Activated naive CD4-positive, alpha-beta T cell treated with anti-CD3 and anti-CD28 coated beads for 36 hours (primary cell): ENCODE measurements at regions of chr1 and their contacts with region 1.

Region 1: GRCh38 chr1:112674439-112674985 is at the start of gene MOV10:
- DNase-seq: peak; percentile 60
- H3K4me3 Mint-ChIP-seq: peak within 1 kb of the TSS; percentile 92
- H3K27ac Mint-ChIP-seq: peak within 1 kb of the TSS; percentile 84
- H3K4me1 Mint-ChIP-seq: peaks cover 38% of the 10 kb centered on the region
- H3K27me3 Mint-ChIP-seq: no peaks in the 10 kb centered on the region
- total RNA-seq, gene MOV10: 46.0 to 48.8 TPM

Region 2: DNA sequence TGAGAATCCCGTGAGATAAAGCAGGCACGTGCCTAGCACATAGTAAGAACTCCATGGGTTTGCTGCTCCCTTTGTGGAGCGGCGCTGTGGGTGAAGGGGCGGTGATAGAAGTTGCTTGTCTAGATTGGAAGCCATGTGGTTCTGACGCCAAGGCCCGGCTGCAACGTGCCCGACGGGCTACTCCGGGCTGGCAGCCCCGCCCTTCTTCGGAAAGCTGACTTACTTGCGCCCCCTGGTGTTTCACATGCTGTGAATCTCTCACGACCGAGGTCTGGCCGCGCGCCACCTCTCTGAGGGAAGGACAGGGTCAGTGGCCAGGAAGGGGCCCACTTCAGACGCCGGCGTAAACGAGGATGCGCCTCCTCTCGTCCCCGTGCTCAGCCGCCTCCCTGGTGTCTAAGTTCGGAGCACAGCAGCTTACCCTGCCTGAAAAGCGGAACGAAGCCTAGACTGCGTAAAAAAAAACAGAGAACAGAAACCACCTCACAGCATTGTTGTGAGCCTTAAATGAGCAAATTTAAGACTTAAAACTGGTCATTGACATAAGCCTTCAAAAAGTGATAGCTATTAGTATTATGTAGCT is 208.3 kb before region 1 on chr1:
- CTCF ChIA-PET with region 1: interaction called, 11 read pairs
- intact Hi-C with region 1: no loop called
- DNase-seq: peak; percentile 92
- H3K4me3 Mint-ChIP-seq: peak overlapping the region; percentile 73
- H3K27ac Mint-ChIP-seq: no peak overlapping the region
- H3K4me1 Mint-ChIP-seq: peaks cover 9% of the 10 kb centered on the region
- H3K27me3 Mint-ChIP-seq: peaks cover 5% of the 10 kb centered on the region

Region 3: DNA sequence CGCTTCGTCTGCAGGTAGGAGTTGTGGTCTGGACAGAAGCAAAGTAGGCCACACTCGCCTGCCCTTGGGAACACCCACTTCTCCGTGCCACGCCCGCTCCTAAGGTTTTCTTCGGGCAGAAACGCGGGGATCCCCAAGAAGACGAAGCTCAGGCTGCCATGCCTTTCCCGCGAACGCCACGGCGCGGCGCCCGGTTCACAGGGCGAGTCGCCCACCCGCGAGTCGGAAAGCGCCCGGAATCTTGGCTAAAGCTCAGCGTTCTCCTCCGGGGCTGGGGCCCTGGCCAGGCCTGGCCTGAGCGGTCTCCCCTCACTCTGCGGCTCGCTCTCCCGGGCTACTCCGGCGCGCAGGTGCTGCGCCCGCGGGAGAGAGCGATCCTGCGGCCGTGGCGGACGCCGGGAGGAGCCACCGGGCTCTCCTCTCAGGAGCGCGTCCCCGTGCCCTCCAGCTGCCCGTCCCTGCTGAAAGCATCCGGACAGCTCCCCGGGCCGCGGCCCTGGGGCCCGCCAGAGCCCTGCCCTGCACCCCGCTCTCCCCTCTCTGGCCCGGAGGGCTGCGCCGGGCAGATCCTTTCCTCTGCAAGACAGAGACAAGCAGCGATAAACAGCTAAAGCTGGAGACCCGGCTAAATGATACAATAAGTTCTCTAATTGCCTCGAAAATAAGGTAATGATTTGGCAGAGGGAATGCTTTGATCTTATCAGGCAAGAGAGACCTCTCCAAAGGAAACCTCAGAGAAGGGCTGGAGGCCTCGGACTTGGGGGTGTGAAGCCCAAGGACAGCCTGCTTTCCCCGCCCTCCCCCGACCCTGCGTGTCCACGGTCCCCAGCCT is 172.5 kb before region 1 on chr1:
- CTCF ChIA-PET with region 1: no interaction called
- intact Hi-C with region 1: loop called (anchors 10 kb)
- DNase-seq: peak; percentile 73
- H3K4me3 Mint-ChIP-seq: peak overlapping the region; percentile 60
- H3K27ac Mint-ChIP-seq: no peak overlapping the region
- H3K4me1 Mint-ChIP-seq: peaks cover 3% of the 10 kb centered on the region
- H3K27me3 Mint-ChIP-seq: peaks cover 58% of the 10 kb centered on the region

Region 4: GRCh38 chr1:112700290-112701226 is 26.0 kb after region 1 on chr1:
- CTCF ChIA-PET with region 1: no interaction called
- intact Hi-C with region 1: loop called (anchors 1 kb)
- DNase-seq: peak; percentile 85
- H3K4me3 Mint-ChIP-seq: no peak overlapping the region
- H3K27ac Mint-ChIP-seq: peak overlapping the region; percentile 87
- H3K4me1 Mint-ChIP-seq: peaks cover 54% of the 10 kb centered on the region
- H3K27me3 Mint-ChIP-seq: no peaks in the 10 kb centered on the region